ENCODE measurements at regions of chr18 and their contacts with region 1.

Region 1: GRCh38 chr18:44758861-44759631 is 78.4 kb downstream of the SETBP1 start:
- DNase-seq: peak; percentile 41
- ATAC-seq: peak; percentile 87
- H3K4me3 Mint-ChIP-seq: peak overlapping the region; percentile 76
- H3K27ac Mint-ChIP-seq: peak overlapping the region; percentile 94
- H3K4me1 Mint-ChIP-seq: peaks cover 93% of the 10 kb centered on the region
- H3K27me3 Mint-ChIP-seq: no peaks in the 10 kb centered on the region
- CTCF ChIP-seq: no peak

Region 2: DNA sequence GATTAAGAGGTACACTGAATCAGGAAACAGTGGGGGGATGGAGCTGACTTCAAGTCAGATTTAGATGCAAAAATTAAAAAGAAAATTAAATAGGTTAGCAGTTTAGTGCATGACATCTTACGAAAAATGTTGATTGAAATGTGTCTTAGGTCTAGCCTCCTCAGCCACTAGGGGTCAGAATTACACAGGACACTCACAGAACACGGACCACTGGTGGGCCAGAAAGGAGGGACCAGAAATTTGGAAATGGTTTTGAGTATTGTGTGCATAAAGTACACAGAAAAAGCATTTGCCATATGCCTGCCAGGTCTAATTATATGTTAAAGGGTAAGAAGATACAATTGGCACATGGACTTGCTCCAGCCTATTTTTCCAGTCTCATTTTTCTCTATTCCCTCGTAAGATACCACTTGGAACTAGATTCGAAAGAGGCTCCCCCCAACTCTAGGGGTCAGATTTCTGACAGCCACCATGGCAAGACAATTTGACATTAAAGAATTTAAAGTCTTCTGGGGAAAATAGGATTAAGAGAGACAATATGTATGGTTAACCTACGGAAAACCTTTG is 628.6 kb before region 1 on chr18:
- CTCF ChIA-PET with region 1: no interaction called
- POLR2A ChIA-PET with region 1: no interaction called
- intact Hi-C with region 1: loop called (anchors 2 kb)
- DNase-seq: no peak
- ATAC-seq: no peak
- H3K4me3 Mint-ChIP-seq: no peak overlapping the region
- H3K27ac Mint-ChIP-seq: no peak overlapping the region
- H3K4me1 Mint-ChIP-seq: peaks cover 8% of the 10 kb centered on the region
- H3K27me3 Mint-ChIP-seq: peaks cover 7% of the 10 kb centered on the region
- CTCF ChIP-seq: peak; percentile 24

Region 3: DNA sequence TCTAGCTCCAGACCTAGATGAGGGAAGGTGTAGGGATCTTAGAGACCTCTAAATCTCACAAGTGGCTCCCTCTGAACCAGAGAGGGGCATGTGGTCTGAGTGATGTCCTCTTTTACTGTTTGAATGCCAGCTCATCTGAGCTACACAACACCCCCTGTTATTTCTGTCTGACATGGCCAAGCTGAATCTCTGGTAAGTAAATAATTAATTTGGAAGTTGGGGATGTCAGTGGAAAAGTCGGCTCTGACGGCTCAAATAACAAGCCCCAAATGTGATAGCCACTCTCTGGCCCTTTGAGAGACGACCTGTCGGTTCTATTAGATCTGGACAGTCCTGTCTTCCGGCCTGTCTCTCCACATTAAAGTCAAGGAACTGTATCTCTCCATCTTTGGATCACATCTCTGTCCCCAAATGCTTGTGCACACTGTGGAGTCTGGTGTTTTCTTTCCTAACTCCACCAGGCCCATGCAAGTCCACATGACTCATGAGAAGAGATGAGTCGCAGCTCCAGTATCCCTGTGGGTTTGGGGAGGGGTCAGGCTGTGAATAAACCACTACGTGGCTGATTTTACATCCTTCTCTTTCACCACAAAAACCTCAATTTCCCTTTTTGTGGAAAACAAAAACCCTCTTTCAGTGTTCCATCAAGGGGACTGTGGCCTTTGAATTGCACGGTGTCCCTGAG is 25.8 kb before region 1 on chr18:
- CTCF ChIA-PET with region 1: interaction called, 5 read pairs
- POLR2A ChIA-PET with region 1: interaction called, 22 read pairs
- intact Hi-C with region 1: loop called (anchors 1 kb)
- DNase-seq: no peak
- ATAC-seq: no peak
- H3K4me3 Mint-ChIP-seq: peak overlapping the region; percentile 24
- H3K27ac Mint-ChIP-seq: peak overlapping the region; percentile 20
- H3K4me1 Mint-ChIP-seq: peaks cover 95% of the 10 kb centered on the region
- H3K27me3 Mint-ChIP-seq: no peaks in the 10 kb centered on the region
- CTCF ChIP-seq: no peak

Region 4: GRCh38 chr18:44786688-44787087 is 27.6 kb after region 1 on chr18:
- CTCF ChIA-PET with region 1: no interaction called
- POLR2A ChIA-PET with region 1: interaction called, 21 read pairs
- intact Hi-C with region 1: loop called (anchors 1 kb)
- DNase-seq: no peak
- ATAC-seq: peak; percentile 75
- H3K4me3 Mint-ChIP-seq: peak overlapping the region; percentile 85
- H3K27ac Mint-ChIP-seq: peak overlapping the region; percentile 92
- H3K4me1 Mint-ChIP-seq: peaks cover 80% of the 10 kb centered on the region
- H3K27me3 Mint-ChIP-seq: no peaks in the 10 kb centered on the region
- CTCF ChIP-seq: no peak

Region 5: GRCh38 chr18:44823782-44824181 is 64.7 kb after region 1 on chr18:
- CTCF ChIA-PET with region 1: no interaction called
- POLR2A ChIA-PET with region 1: interaction called, 8 read pairs
- intact Hi-C with region 1: loop called (anchors 2 kb)
- DNase-seq: no peak
- ATAC-seq: peak; percentile 38
- H3K4me3 Mint-ChIP-seq: no peak overlapping the region
- H3K27ac Mint-ChIP-seq: no peak overlapping the region
- H3K4me1 Mint-ChIP-seq: peaks cover 67% of the 10 kb centered on the region
- H3K27me3 Mint-ChIP-seq: no peaks in the 10 kb centered on the region
- CTCF ChIP-seq: no peak

Region 6: DNA sequence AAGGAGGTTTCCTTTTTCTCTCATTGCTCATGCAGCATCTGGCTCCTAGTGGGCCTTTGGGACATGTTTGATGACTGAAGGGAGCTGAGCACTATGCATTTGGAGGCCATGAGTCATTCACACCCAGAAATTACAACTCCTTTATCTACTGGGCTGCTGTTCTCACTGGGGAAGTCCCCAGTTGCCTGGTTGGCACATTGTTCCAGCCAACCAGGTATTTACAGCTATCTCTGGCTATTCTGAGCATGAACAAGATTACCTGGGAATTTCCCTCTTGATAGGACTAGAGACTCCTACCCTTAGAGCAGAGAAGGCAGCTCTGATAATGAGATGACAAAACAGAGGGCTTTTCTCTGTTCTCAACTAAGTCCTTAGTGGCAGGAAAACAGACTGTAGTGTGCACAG is 128.2 kb after region 1 on chr18:
- CTCF ChIA-PET with region 1: no interaction called
- POLR2A ChIA-PET with region 1: interaction called, 30 read pairs
- intact Hi-C with region 1: loop called (anchors 1 kb)
- DNase-seq: peak; percentile 23
- ATAC-seq: peak; percentile 95
- H3K4me3 Mint-ChIP-seq: peak overlapping the region; percentile 59
- H3K27ac Mint-ChIP-seq: peak overlapping the region; percentile 94
- H3K4me1 Mint-ChIP-seq: peaks cover 58% of the 10 kb centered on the region
- H3K27me3 Mint-ChIP-seq: no peaks in the 10 kb centered on the region
- CTCF ChIP-seq: no peak

Region 7: GRCh38 chr18:45341454-45341853 is 582.4 kb after region 1 on chr18:
- CTCF ChIA-PET with region 1: no interaction called
- POLR2A ChIA-PET with region 1: no interaction called
- intact Hi-C with region 1: no loop called
- DNase-seq: no peak
- ATAC-seq: no peak
- H3K4me3 Mint-ChIP-seq: no peak overlapping the region
- H3K27ac Mint-ChIP-seq: no peak overlapping the region
- H3K4me1 Mint-ChIP-seq: no peaks in the 10 kb centered on the region
- H3K27me3 Mint-ChIP-seq: peaks cover 5% of the 10 kb centered on the region
- CTCF ChIP-seq: no peak